ENCODE measurements at regions of chr6 and their contacts with region 1.

Region 1: DNA sequence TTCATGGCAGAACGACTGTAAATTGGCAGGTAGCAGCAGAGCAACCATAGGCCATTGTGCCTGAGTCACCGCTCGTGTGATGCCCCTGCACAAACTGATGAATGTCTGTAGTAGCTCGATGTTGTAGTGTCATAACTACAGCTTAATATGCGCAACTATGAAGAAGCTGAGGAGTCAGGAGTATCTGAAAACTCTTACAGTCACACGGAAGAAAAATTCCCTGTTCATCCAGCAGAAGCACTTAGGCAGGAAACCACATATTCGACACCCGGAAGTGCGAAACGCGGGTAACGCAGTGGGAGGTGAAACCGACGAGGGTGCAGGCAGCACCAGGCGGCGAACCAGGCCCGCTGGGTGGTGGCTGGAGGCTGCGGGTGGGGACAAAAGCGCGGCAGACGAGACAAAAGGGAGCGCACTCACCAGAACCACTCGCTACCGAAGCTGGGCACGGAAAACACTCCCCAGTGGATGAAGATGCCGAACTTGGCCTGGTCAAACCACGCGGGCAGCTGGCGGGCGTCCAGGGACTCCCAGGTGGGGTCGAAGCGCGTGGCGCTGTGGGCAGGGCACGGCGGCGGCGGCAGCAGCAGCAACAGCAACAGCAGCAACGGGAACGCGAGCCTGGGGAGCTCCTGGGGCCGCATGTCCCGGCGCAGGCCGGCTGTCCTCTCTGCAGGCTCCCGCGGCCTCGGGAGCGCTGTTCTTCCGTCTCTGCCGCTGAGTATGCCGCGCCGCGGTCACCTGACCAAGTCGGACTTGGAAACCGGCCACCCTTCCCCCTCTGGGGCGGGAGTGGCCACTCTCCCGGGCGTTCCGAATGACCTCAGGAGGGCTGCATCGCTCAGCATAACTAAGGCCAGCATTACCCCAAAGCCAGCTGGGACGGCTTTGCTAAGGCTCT is at the start of gene FUCA2:
- DNase-seq: peak; percentile 76
- ATAC-seq: peak; percentile 85
- H3K4me3 Mint-ChIP-seq: peak within 1 kb of the TSS; percentile 82
- H3K27ac Mint-ChIP-seq: peak within 1 kb of the TSS; percentile 94
- H3K4me1 Mint-ChIP-seq: peaks cover 20% of the 10 kb centered on the region
- H3K27me3 Mint-ChIP-seq: no peaks in the 10 kb centered on the region
- total RNA-seq, gene FUCA2: 10.7 to 13.8 TPM

Region 2: GRCh38 chr6:143522034-143522600 is 10.9 kb after region 1 on chr6:
- CTCF ChIA-PET with region 1: interaction called, 11 read pairs
- POLR2A ChIA-PET with region 1: no interaction called
- DNase-seq: no peak
- ATAC-seq: no peak
- H3K4me3 Mint-ChIP-seq: no peak overlapping the region
- H3K27ac Mint-ChIP-seq: no peak overlapping the region
- H3K4me1 Mint-ChIP-seq: no peaks in the 10 kb centered on the region
- H3K27me3 Mint-ChIP-seq: peaks cover 4% of the 10 kb centered on the region

Region 3: GRCh38 chr6:143531720-143532499 is 20.7 kb after region 1 on chr6:
- CTCF ChIA-PET with region 1: interaction called, 15 read pairs
- POLR2A ChIA-PET with region 1: interaction called, 9 read pairs
- DNase-seq: no peak
- ATAC-seq: no peak
- H3K4me3 Mint-ChIP-seq: no peak overlapping the region
- H3K27ac Mint-ChIP-seq: no peak overlapping the region
- H3K4me1 Mint-ChIP-seq: peaks cover 20% of the 10 kb centered on the region
- H3K27me3 Mint-ChIP-seq: no peaks in the 10 kb centered on the region

Region 4: GRCh38 chr6:143539734-143540133 is 28.5 kb after region 1 on chr6:
- CTCF ChIA-PET with region 1: interaction called, 15 read pairs
- POLR2A ChIA-PET with region 1: interaction called, 9 read pairs
- DNase-seq: no peak
- ATAC-seq: no peak
- H3K4me3 Mint-ChIP-seq: no peak overlapping the region
- H3K27ac Mint-ChIP-seq: peak overlapping the region; percentile 25
- H3K4me1 Mint-ChIP-seq: peaks cover 53% of the 10 kb centered on the region
- H3K27me3 Mint-ChIP-seq: no peaks in the 10 kb centered on the region

Region 5: GRCh38 chr6:143556529-143556928 is 45.3 kb after region 1 on chr6:
- CTCF ChIA-PET with region 1: interaction called, 10 read pairs
- POLR2A ChIA-PET with region 1: no interaction called
- DNase-seq: no peak
- ATAC-seq: no peak
- H3K4me3 Mint-ChIP-seq: no peak overlapping the region
- H3K27ac Mint-ChIP-seq: no peak overlapping the region
- H3K4me1 Mint-ChIP-seq: peaks cover 46% of the 10 kb centered on the region
- H3K27me3 Mint-ChIP-seq: no peaks in the 10 kb centered on the region

Region 6: GRCh38 chr6:144013486-144013909 is 502.3 kb after region 1 on chr6:
- CTCF ChIA-PET with region 1: interaction called, 14 read pairs
- POLR2A ChIA-PET with region 1: no interaction called
- DNase-seq: peak; percentile 67
- ATAC-seq: no peak
- H3K4me3 Mint-ChIP-seq: no peak overlapping the region
- H3K27ac Mint-ChIP-seq: no peak overlapping the region
- H3K4me1 Mint-ChIP-seq: peaks cover 5% of the 10 kb centered on the region
- H3K27me3 Mint-ChIP-seq: peaks cover 15% of the 10 kb centered on the region